Sciatic nerve (tissue), 2 donors: ENCODE measurements at regions of chr4 and their contacts with region 1.

Region 1: DNA sequence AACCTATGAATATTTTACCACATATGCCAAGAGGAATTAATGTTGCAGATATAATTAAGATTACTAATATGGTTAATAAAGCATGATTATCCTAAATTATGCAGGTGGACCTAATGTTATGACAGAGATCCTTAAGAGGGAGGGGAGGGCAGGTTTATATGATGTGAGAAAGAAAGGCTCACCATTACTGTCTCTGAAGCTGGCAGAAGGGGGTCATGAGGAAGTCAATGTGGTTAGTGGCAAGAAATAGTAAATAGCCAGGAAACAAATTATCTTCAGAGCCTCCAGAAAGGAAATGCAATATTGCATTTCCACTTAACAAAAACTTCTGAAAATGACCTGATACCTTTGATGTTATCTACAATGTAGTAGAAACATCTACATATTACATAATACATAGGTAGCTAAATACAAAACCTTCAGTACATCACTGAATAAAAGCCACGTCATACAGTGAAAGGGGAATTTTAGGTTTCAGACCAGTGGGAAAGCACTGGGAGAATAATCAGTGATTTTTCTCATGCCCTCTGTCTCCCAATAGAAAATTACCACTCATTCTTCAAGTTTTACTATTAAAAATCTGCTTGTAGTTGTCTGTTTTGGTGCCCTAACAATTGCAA is 609.2 kb downstream of the SPOCK3 start:
- DNase-seq: no peak
- ATAC-seq: no peak

Region 2: DNA sequence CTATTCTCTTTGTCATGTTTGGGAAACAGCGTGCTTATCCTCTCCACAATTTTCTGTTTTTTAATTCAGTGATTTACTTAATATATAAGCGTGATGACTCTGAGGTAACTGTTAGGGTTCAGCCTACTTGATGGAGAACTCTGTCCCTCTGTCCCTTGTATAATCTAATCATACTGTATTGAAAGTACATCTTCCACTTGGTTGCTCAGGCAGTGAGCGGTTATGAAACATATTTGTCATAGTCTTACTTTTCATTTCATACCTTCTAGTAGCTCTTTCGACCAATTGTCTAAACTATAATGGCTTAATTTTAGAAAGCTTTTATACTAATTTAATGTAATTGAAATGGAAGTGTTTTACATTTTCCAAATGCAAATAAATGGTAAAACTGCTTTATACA is 283.1 kb before region 1 on chr4:
- intact Hi-C with region 1: no loop called
- DNase-seq: no peak
- ATAC-seq: no peak

Region 3: DNA sequence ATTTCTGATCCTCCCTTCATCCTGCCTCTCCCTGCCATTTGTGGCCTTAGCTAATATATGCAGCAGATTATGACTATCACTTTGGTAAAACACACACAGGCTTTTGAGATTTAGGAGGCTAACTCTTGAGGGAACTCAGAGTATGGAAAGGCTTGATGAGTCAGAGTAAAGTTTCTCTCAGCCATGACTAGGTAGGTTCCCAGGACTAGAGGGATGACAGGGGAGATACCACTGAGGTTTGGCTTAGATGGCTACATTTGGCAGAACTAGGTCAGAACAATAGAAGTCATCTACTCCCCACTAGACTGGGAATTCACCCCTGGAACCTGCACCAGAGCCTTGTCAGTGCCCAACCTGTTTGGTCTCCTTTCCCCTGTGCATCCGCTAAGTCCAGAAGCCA is 166.4 kb before region 1 on chr4:
- intact Hi-C with region 1: no loop called
- DNase-seq: no peak
- ATAC-seq: no peak

Region 4: GRCh38 chr4:166577639-166578038 is 47.5 kb before region 1 on chr4:
- intact Hi-C with region 1: no loop called
- DNase-seq: no peak
- ATAC-seq: no peak

Region 5: DNA sequence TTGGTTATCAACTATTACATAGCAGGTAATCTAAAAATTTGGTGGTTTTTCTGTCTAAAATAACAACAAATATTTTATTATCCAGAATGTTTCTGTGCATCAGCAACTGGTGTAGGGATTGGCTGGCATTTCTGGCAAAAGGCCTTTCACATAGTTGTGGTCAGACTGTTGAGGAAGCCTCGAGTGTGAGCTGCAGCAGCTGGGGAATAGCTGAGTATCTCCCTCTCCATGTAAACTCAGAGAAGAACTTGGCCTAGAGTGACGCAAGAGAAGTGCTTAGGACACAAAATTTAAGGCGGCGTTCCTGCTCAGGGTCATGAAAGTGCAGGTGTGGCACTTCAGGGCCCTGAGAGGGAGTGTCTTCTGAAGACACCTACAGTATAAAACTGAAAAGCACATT is 50.3 kb after region 1 on chr4:
- intact Hi-C with region 1: loop called (anchors 2 kb)
- DNase-seq: peak; percentile 45
- ATAC-seq: peak; percentile 92

Region 6: GRCh38 chr4:168199260-168199957 is 1574.3 kb after region 1 on chr4:
- intact Hi-C with region 1: no loop called
- DNase-seq: no peak
- ATAC-seq: no peak